ENCODE measurements at regions of chr14 and their contacts with region 1.

Region 1: GRCh38 chr14:70821584-70822529 is 12.5 kb upstream of the MAP3K9 start:
- DNase-seq: peak; percentile 58

Region 2: GRCh38 chr14:70907176-70907995 is 85.5 kb after region 1 on chr14 and contains the start of gene PCNX1:
- CTCF ChIA-PET with region 1: interaction called, 3 read pairs
- POLR2A ChIA-PET with region 1: interaction called, 12 read pairs
- DNase-seq: peak; percentile 90

Measured in HEK293T (cell line).